BJ (cell line): ENCODE measurements at regions of chr17 and their contacts with region 1.

Region 1: DNA sequence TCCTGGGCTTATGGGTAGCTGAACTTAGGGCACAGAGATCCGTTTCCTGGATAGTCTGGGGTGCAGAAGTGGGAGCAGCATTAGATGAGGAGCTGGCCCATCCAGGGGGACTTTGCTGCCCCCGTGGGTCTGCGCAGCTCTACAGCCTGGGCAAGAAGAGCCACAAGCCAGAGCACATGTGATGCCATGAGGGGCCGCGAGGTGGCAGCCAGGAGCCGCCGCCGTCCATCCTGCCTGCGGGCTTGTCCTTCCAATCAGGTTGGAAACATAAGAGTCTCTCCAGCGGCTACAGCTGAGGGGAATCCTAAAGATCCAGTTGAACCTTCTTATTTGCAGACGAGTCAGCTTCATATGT is 21.9 kb downstream of the C1QTNF1 start:
- DNase-seq: no peak
- H3K4me3 ChIP-seq: no peak overlapping the region
- H3K27me3 ChIP-seq: no peaks in the 10 kb centered on the region; the same call in 1 of the 2 replicates
- CTCF ChIP-seq: peak; percentile 98

Region 2: GRCh38 chr17:79027925-79028813 is 17.6 kb before region 1 on chr17:
- CTCF ChIA-PET with region 1: interaction called, 61 read pairs
- POLR2A ChIA-PET with region 1: no interaction called
- DNase-seq: no peak
- H3K4me3 ChIP-seq: no peak overlapping the region
- H3K27me3 ChIP-seq: no peaks in the 10 kb centered on the region
- CTCF ChIP-seq: peak; percentile 34; the same call in 1 of the 2 replicates

Region 3: DNA sequence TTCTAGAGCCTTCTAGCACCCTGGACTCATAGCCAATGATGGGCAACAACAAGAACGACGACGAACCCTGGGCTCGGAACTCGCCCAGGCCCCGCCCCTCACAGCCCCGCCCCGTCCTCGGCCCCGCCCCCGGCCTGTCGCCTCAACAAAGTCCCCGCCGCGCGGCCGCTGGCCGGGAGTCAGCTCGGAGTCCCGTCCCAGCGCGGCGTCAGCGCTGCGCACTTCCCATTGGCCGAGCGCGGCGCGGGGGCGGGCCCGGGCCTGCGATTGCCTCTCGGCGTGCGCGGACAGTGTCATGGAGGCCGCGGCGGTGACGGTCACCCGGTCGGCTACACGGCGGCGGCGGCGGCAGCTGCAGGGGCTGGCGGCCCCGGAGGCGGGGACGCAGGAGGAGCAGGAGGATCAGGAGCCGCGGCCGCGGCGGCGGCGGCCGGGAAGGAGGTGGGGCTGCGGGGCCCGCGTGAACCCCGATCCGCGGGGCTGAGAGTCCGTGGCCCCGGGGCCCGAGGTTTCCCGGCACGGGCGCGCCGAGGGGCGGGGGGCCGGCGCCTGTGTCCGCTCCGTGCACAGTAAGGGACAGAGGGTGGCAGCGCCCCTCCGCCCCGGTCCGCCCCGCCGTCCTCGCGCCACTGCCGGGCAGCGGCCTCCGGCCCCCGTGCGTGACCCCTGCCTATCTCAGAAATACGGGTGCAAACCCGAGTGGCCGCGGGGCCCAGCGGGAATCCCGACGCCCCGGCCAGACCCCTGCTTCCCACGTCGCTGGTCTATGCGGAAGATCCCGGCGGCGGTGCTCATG is 29.0 kb after region 1 on chr17 and contains the start of gene ENGASE:
- CTCF ChIA-PET with region 1: interaction called, 19 read pairs
- POLR2A ChIA-PET with region 1: no interaction called
- DNase-seq: peak; percentile 35
- H3K4me3 ChIP-seq: peak within 1 kb of the TSS; percentile 71
- H3K27me3 ChIP-seq: peaks cover 2% of the 10 kb centered on the region
- CTCF ChIP-seq: no peak
- polyA plus RNA-seq, gene ENGASE: 4.7 and 7.4 TPM in 2 replicates

Region 4: DNA sequence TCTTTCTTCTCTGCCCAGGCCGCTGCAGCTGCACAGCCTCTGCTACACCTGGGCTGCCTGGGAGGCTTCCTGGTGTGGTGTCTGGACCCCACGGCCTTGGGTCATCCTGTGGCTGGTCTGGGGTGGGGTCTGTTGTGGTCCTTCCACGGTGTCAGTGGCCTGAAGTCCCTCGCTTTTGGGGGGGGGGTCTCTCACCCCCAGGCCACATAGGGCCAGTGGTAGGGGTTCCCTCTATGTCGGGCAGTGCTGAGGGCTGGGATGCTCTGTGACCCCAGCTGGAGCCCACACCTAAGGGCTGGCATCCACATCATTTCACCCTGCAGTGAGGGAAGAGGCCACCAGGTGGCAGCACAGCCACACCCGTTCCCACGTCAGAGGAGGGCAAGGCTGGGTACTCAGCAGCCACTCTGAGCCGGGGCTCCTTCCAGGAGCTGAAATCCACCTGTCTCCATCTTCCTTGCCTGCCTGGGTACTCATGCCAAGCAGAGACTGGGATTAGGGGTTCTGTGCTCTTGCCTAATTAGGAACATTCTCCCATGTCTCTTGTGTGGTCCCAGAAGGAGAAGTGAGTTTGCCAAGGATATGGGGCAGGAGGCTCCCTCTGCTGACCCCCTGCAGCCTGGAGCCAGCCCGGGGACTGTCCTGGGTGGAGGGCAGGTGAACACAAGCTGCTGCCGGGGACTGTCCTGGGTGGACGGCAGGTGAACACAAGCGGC is 41.8 kb after region 1 on chr17:
- CTCF ChIA-PET with region 1: interaction called, 46 read pairs
- POLR2A ChIA-PET with region 1: no interaction called
- DNase-seq: no peak
- H3K4me3 ChIP-seq: no peak overlapping the region
- H3K27me3 ChIP-seq: no peaks in the 10 kb centered on the region
- CTCF ChIP-seq: peak; percentile 89